ENCODE measurements at regions of chr7 and their contacts with region 1.

Region 1: GRCh38 chr7:143408686-143409561 is at the start of gene EPHA1:
- DNase-seq: peak; percentile 50
- H3K4me3 Mint-ChIP-seq: peak within 1 kb of the TSS; percentile 70
- H3K27ac Mint-ChIP-seq: peak within 1 kb of the TSS; percentile 56
- H3K4me1 Mint-ChIP-seq: peaks cover 45% of the 10 kb centered on the region
- H3K27me3 Mint-ChIP-seq: no peaks in the 10 kb centered on the region
- total RNA-seq, gene EPHA1: 10.0 to 11.4 TPM

Region 2: GRCh38 chr7:141483044-141483443 is 1925.9 kb before region 1 on chr7:
- CTCF ChIA-PET with region 1: no interaction called
- POLR2A ChIA-PET with region 1: no interaction called
- DNase-seq: no peak
- H3K4me3 Mint-ChIP-seq: no peak overlapping the region
- H3K27ac Mint-ChIP-seq: no peak overlapping the region
- H3K4me1 Mint-ChIP-seq: no peaks in the 10 kb centered on the region
- H3K27me3 Mint-ChIP-seq: peaks cover 11% of the 10 kb centered on the region

Region 3: DNA sequence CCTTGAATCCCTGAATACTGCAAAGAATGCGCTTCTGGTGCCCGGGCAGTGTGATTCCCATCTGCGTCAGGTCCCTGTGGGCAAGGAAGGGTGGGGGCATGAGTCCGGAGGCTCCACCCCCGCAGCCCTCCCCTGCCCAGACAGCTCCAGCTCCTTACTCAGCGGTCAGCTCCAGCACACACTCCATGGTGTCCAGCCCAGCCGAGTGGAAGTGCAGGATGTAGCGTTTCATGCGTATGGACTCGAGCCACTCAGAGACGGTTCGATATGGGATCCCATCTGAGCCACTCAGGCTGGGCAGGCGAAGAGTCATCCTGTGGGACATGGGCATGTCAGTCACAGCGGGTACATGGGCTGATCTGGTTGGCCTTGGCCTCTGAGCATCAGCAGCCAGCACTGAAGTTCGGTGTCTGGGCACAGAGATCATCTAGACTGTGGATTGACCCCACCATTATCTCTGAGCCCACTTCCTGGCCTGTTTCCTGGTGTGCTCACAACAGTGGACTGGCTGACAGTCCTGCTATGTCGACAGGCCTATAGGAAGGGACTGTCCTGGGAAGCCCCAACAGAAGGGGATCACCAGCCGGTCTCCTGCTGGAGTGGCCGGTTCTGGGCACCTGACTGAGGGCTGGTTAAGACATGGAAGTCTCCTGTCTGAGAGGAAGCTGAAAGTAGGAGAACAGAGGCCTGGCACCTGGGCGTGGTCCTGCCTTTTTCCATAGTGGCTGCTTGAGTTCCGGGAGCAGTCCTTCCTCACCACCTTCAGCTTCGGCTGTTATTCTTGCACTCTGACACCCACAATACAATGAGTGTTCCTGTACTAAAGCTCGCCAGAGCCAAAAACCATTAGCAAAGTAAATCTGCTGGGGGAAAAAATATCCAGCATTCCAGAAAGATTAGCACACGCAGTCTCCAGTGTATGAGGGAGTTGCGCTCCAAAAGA is 17.2 kb before region 1 on chr7:
- CTCF ChIA-PET with region 1: interaction called, 41 read pairs
- POLR2A ChIA-PET with region 1: interaction called, 3 read pairs
- DNase-seq: no peak
- H3K4me3 Mint-ChIP-seq: no peak overlapping the region
- H3K27ac Mint-ChIP-seq: no peak overlapping the region
- H3K4me1 Mint-ChIP-seq: peaks cover 31% of the 10 kb centered on the region
- H3K27me3 Mint-ChIP-seq: no peaks in the 10 kb centered on the region